ENCODE measurements at regions of chr6 and their contacts with region 1.

Region 1: GRCh38 chr6:35240840-35241801 is 18.4 kb upstream of the ZNF76 start:
- DNase-seq: peak in 1 of 2 donors; percentile 86
- H3K4me3 ChIP-seq: no peak overlapping the region
- H3K27ac ChIP-seq: peak overlapping the region; percentile 78 to 89
- H3K4me1 ChIP-seq: peaks cover 8 to 24% of the 10 kb centered on the region in 2 donors
- H3K27me3 ChIP-seq: no peaks in the 10 kb centered on the region
- CTCF ChIP-seq: peak; percentile 91 to 96 (median 93)

Region 2: GRCh38 chr6:34671801-34672656 is 569.1 kb before region 1 on chr6:
- intact Hi-C with region 1: no loop called
- DNase-seq: no peak
- H3K4me3 ChIP-seq: no peak overlapping the region
- H3K27ac ChIP-seq: peak overlapping the region; percentile 23 to 61
- H3K4me1 ChIP-seq: peaks cover 0 to 22% of the 10 kb centered on the region in 2 donors
- H3K27me3 ChIP-seq: no peaks in the 10 kb centered on the region
- CTCF ChIP-seq: no peak

Region 3: DNA sequence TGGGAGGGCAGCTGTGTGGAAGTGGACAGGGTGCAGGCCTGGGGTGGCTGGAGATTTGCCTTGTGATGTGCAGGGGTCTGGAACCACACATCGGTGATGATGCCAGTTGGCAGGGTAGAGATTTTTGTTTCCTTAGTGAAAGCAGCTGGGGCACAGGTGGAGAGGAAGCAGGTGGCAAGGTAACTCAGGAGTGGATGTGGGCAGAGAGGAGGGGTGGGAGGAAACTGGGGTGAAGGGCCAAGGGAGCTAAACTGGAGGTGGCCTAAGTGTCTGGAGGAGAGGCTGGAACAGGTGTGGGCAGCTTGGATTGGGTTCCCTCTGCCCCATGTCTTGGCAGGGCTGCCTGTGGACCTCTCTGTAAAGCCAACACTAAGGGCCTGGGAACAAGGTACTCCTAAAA is 32.0 kb before region 1 on chr6:
- intact Hi-C with region 1: loop called (anchors 2 kb)
- DNase-seq: no peak
- H3K4me3 ChIP-seq: no peak overlapping the region
- H3K27ac ChIP-seq: no peak overlapping the region
- H3K4me1 ChIP-seq: peaks cover 5 to 6% of the 10 kb centered on the region in 2 donors
- H3K27me3 ChIP-seq: no peaks in the 10 kb centered on the region
- CTCF ChIP-seq: no peak

Region 4: GRCh38 chr6:35216851-35217811 is 24.0 kb before region 1 on chr6:
- intact Hi-C with region 1: loop called (anchors 2 kb)
- DNase-seq: no peak
- H3K4me3 ChIP-seq: peak overlapping the region; percentile 39 to 94
- H3K27ac ChIP-seq: peak overlapping the region; percentile 83 to 89
- H3K4me1 ChIP-seq: peaks cover 33 to 42% of the 10 kb centered on the region in 2 donors
- H3K27me3 ChIP-seq: no peaks in the 10 kb centered on the region
- CTCF ChIP-seq: no peak

Measured in ascending aorta (tissue), 2 donors.